ENCODE measurements at regions of chr11 and their contacts with region 1.

Region 1: DNA sequence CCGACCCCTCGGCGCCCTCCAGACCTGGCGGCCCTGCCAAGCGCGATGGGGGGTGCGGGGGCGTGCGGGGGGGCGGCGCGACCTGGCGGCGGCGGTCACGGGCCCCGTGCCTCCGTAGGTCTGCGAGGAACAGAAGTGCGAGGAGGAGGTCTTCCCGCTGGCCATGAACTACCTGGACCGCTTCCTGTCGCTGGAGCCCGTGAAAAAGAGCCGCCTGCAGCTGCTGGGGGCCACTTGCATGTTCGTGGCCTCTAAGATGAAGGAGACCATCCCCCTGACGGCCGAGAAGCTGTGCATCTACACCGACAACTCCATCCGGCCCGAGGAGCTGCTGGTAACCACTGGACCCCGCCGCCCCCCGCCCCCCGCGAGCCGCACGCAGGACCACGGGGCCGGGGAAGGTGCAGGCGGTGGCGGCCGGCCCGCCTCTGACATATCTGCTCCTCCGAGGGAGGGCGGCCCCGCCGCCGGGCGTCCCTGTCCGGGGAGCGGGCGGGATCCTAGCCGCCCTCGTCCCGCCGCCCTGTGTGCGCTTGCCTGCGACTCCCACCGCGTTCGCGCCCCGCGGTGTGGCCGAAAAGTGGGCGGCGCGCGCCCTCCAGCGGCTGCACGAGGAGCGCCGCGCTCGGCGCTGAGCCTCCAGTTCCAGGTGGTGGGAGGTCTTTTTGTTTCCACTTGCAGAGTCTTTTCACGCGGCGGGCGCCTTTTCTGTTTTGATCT is 2.1 kb downstream of the CCND1 start:
- DNase-seq: peak; percentile 86
- ATAC-seq: peak; percentile 80
- H3K4me3 Mint-ChIP-seq: peak overlapping the region; percentile 83
- H3K27ac Mint-ChIP-seq: no peak overlapping the region
- H3K4me1 Mint-ChIP-seq: peaks cover 32% of the 10 kb centered on the region
- H3K27me3 Mint-ChIP-seq: peaks cover 11% of the 10 kb centered on the region
- CTCF ChIP-seq: peak; percentile 68

Region 2: DNA sequence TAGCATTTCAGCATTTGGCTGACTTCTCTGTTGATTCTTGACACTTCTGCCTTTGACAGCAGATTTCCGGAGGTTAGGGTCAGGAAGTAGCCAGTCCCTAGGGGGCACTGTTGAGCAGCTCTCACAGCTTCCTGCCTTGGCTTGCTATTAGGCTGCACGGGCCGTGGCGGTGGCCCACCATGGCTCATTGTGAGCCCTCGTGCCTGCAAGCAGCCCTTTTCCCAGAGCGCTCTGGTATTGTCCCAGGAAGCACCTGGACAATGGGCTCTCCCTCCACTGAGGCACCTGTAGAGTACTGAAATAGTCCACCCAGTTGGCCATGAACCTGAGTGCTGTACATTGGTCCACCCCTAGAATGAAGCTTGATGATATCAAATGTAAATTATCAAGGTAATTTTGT is 1059.0 kb before region 1 on chr11:
- CTCF ChIA-PET with region 1: interaction called, 3 read pairs
- POLR2A ChIA-PET with region 1: no interaction called
- intact Hi-C with region 1: loop called (anchors 5 kb)
- DNase-seq: peak; percentile 33
- ATAC-seq: peak; percentile 64
- H3K4me3 Mint-ChIP-seq: no peak overlapping the region
- H3K27ac Mint-ChIP-seq: no peak overlapping the region
- H3K4me1 Mint-ChIP-seq: peaks cover 16% of the 10 kb centered on the region
- H3K27me3 Mint-ChIP-seq: no peaks in the 10 kb centered on the region
- CTCF ChIP-seq: peak; percentile 27

Region 3: DNA sequence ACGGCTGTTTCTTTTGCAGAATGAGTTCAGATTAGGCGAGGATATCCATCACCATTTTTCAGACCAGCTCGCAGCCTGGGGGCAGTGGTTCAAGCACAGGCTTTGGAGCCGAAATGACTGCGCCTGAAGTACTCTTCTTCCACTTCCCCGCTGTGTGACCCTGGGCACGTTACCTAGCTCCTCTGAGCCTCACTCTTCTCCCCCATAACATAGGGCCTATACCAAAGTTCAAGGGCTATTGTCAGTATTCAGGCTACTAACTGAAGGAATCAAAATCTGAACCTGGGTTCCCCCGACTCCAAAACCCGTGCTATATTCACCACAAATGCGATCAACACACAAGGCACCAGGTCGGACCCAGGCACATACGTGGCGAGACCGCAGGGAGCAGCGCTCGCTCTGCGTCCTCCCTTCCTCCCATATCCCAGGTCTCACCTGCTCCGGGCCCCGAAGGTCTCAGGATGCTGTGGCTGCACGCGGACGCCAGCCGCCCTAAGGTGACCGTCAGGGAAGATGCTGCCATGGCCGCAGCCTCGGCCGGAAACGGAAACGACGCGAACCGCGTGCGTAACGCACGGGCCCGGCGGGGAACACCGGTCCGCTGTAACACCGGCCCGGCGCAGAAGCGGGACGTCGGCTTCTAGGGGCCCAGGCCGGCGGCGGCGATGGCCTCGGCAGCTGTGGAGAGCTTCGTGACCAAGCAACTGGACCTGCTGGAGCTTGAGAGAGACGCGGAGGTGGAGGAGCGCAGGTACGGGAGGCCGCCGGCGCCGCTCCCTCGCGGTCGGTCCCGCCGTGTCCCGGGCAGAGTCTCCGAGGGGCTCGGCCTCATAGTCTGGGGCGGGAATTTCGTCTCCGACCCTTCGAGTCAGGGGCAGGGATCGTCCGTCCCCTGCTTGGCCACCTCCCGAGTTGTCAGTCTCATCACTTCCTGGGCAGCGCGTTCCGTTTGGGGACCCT is 739.5 kb before region 1 on chr11 and contains the starts of genes IGHMBP2 and MRPL21:
- CTCF ChIA-PET with region 1: no interaction called
- POLR2A ChIA-PET with region 1: no interaction called
- intact Hi-C with region 1: loop called (anchors 5 kb)
- DNase-seq: peak; percentile 87
- ATAC-seq: peak; percentile 96
- H3K4me3 Mint-ChIP-seq: peak within 1 kb of the TSS; percentile 97
- H3K27ac Mint-ChIP-seq: peak within 1 kb of the TSS; percentile 82
- H3K4me1 Mint-ChIP-seq: peaks cover 44% of the 10 kb centered on the region
- H3K27me3 Mint-ChIP-seq: no peaks in the 10 kb centered on the region
- CTCF ChIP-seq: no peak
- total RNA-seq, gene IGHMBP2: 24.2 and 33.8 TPM in 2 replicates
- total RNA-seq, gene MRPL21: 49.9 and 60.0 TPM in 2 replicates

Region 4: DNA sequence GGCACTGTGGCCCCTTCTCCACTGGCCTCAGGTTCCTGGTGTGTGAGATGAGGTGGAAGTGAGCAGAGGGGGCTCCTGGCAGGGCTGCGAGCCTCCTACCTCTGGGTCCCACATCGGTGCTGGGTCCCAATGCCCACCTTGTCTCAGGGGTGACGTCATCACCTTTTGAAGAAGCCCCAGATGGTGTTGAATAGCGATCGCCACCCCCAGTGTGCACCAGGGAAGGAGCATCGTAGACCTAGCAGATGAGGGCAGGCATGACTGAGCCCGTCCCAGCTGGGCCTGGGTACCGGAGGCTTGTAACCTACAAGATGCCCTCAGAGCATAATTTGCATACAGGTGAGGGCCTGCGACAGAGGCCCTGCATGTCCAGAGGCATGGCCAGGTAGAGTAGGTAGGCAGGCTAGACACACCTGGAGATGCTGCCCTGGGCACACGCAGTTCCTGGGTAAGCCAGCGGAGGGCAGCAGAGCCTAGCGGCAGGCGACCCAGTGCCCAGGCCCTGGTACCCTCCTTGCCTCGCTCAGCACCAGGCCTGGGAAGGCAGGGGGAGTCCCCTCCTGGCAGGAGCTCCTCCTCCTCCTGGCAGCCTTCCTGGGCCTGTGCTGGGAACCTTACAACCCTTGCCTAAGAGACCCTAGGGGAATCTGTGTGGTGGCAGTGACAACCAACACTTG is 541.8 kb before region 1 on chr11:
- CTCF ChIA-PET with region 1: interaction called, 75 read pairs
- POLR2A ChIA-PET with region 1: interaction called, 8 read pairs
- intact Hi-C with region 1: loop called (anchors 1 kb)
- DNase-seq: peak; percentile 78
- ATAC-seq: peak; percentile 99
- H3K4me3 Mint-ChIP-seq: no peak overlapping the region
- H3K27ac Mint-ChIP-seq: no peak overlapping the region
- H3K4me1 Mint-ChIP-seq: no peaks in the 10 kb centered on the region
- H3K27me3 Mint-ChIP-seq: peaks cover 6% of the 10 kb centered on the region
- CTCF ChIP-seq: peak; percentile 56

Region 5: DNA sequence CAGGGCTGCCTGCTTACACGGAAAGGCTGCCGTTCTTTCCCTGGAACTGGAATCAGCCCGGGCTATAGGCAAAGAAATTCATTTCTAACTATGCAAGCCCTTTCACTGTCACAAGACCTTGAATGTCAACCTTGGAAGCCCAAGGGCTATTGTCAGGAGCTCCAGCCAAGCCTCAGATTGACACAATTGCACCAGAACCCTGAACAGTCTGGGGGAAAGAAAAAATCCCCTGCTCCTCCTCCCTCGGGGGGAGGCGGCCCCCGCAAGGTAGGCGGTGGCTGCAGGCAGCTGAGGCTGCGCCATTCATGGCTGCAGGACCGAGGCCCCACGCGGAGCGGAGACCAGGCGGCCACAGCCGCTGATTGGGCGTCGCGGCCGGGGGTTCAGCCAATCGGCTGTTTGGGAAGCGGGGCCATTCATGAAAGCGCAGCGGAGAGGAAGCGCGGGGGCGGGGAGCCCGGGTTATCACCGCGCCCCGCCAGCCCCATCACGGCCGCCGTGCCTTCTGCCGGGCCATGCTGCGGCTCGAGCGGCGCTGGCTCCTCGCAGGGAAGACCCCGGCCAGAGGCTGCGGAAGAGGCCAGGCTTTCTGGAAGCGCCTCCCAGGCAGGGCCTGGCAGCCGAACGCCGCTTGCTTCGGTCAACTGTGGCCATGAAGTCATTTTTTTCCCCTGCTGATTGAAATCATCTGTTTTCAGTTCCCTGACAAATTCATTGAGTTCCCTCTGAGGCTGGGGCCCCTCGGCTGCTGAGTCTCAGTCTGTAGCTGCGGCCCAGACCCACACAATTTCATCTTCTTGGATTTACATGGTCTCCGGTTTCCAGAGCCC is 199.7 kb before region 1 on chr11:
- CTCF ChIA-PET with region 1: no interaction called
- POLR2A ChIA-PET with region 1: no interaction called
- intact Hi-C with region 1: loop called (anchors 2 kb)
- DNase-seq: peak; percentile 72
- ATAC-seq: peak; percentile 95
- H3K4me3 Mint-ChIP-seq: peak overlapping the region; percentile 79
- H3K27ac Mint-ChIP-seq: no peak overlapping the region
- H3K4me1 Mint-ChIP-seq: peaks cover 16% of the 10 kb centered on the region
- H3K27me3 Mint-ChIP-seq: peaks cover 10% of the 10 kb centered on the region
- CTCF ChIP-seq: no peak

Region 6: DNA sequence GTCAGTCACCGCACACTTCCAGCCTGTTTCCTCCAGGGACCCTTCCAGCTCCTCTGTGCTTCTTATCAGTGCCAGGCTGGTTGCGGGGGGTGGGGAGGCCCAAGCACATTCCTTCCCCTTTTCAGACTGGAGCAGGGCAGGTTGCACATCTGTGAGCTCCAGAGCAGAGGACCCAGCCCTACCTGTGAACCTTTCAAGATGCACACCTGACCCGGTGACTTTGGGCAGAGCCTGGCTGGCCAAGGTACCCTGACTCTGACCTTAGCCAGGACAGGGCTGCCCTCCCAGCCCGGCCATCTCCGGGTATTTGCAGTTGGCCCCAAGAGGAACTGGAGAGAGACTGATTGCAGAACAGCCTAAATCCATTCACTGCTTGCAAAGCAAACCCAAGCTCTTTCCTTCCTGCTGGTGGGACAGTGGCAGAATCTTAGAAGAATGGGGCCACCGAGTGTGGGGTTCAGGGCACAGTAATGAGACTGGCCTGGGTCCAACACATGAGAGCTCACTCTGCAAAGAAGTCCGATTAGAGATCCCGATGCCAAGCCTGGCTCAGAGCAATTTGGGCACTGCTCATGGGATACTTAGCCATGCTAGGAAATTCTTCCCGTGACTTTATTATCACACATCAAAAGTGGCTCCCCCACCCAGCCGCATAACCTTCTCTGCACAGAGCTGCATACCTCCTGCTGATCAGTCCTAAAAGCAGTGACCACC is 66.8 kb before region 1 on chr11:
- CTCF ChIA-PET with region 1: no interaction called
- POLR2A ChIA-PET with region 1: no interaction called
- intact Hi-C with region 1: no loop called
- DNase-seq: no peak
- ATAC-seq: no peak
- H3K4me3 Mint-ChIP-seq: no peak overlapping the region
- H3K27ac Mint-ChIP-seq: no peak overlapping the region
- H3K4me1 Mint-ChIP-seq: no peaks in the 10 kb centered on the region
- H3K27me3 Mint-ChIP-seq: peaks cover 38% of the 10 kb centered on the region
- CTCF ChIP-seq: no peak

Region 7: DNA sequence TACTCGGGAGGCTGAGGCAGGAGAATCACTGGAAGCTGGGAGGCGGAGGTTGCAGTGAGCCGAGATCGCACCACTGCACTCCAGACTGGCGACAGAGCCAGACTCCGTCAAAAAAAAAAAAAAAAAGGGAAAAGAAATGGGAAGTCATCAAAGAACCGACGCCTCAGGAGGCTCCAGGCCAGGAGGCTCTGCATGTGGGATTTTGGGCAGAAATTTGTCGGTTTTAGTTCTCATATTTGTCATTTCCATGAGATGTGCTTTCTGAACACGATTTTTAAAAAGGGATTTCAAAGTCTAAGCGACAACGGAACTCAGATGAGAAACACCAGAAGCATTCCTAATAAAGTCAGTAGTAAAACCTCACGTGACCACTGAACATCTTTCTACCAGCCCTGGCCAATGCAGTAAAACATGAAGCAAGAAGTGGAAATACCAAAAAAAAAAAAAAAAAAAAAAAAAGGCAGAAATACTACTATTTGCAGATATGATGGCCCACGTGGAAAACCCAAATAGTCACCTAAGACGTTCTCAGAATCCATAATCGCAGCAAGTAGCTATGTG is 32.8 kb after region 1 on chr11:
- CTCF ChIA-PET with region 1: interaction called, 13 read pairs
- POLR2A ChIA-PET with region 1: interaction called, 8 read pairs
- intact Hi-C with region 1: loop called (anchors 1 kb)
- DNase-seq: no peak
- ATAC-seq: no peak
- H3K4me3 Mint-ChIP-seq: peak overlapping the region; percentile 95
- H3K27ac Mint-ChIP-seq: no peak overlapping the region
- H3K4me1 Mint-ChIP-seq: peaks cover 25% of the 10 kb centered on the region
- H3K27me3 Mint-ChIP-seq: peaks cover 3% of the 10 kb centered on the region
- CTCF ChIP-seq: no peak

Measured in activated B cell treated with CpG ODN at 0.5 μM for 24 hours (primary cell).